Caco-2 (cell line): ENCODE measurements at regions of chr4 and their contacts with region 1.

Region 1: GRCh38 chr4:119785963-119786362 is 157.4 kb upstream of the PDE5A start:
- DNase-seq: peak in 1 of 2 experiments; percentile 34
- H3K4me3 ChIP-seq: no peak overlapping the region
- H3K4me3 Mint-ChIP-seq: no peak overlapping the region
- H3K27ac Mint-ChIP-seq: no peak overlapping the region
- H3K4me1 ChIP-seq: no peaks in the 10 kb centered on the region
- H3K4me1 Mint-ChIP-seq: no peaks in the 10 kb centered on the region
- H3K27me3 ChIP-seq: no peaks in the 10 kb centered on the region
- H3K27me3 Mint-ChIP-seq: no peaks in the 10 kb centered on the region
- CTCF ChIP-seq: peak; percentile 51 to 63

Region 2: DNA sequence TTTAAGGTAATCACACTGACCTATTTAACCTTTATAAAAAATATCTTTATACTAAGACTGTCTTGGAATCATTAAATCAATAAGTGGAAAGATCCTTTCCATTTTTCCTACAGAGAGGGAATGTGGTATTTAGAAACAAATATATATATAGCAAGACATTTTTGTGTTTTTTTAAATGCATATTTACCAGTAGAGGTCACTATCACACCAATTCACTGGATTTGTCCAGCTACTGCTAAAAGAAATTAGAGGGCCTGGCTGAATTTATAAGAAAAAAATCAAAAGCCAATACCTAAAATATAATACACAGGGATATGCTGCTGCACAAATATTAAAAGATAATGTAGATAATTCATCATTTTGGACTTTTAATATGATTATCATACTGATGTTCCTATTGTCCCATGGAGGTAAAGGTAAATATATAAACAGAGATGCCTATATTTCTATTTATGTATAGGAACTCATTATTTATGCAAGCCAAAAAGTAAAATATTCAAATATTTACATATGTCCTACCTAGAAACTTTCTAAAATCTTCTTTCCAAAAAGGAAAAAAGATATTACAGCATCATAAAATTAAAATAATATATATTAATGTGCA is 226.8 kb before region 1 on chr4:
- CTCF ChIA-PET with region 1: no interaction called
- POLR2A ChIA-PET with region 1: no interaction called
- intact Hi-C with region 1: loop called (anchors 2 kb)
- DNase-seq: peak in 1 of 2 experiments; percentile 16
- H3K4me3 ChIP-seq: no peak overlapping the region
- H3K4me3 Mint-ChIP-seq: no peak overlapping the region
- H3K27ac Mint-ChIP-seq: no peak overlapping the region
- H3K4me1 ChIP-seq: no peaks in the 10 kb centered on the region
- H3K4me1 Mint-ChIP-seq: no peaks in the 10 kb centered on the region
- H3K27me3 ChIP-seq: no peaks in the 10 kb centered on the region
- H3K27me3 Mint-ChIP-seq: no peaks in the 10 kb centered on the region
- CTCF ChIP-seq: peak; percentile 29 to 38